ENCODE measurements at regions of chr11 and their contacts with region 1.

Region 1: GRCh38 chr11:2143799-2144543 is 4.8 kb upstream of the IGF2 start:
- DNase-seq: peak; percentile 21
- ATAC-seq: no peak
- H3K4me3 ChIP-seq: peak overlapping the region; percentile 41
- H3K27ac ChIP-seq: no peak overlapping the region
- H3K4me1 ChIP-seq: peaks cover 14% of the 10 kb centered on the region
- H3K27me3 ChIP-seq: peaks cover 67% of the 10 kb centered on the region
- CTCF ChIP-seq: no peak; the same call in 1 of the 2 replicates

Region 2: DNA sequence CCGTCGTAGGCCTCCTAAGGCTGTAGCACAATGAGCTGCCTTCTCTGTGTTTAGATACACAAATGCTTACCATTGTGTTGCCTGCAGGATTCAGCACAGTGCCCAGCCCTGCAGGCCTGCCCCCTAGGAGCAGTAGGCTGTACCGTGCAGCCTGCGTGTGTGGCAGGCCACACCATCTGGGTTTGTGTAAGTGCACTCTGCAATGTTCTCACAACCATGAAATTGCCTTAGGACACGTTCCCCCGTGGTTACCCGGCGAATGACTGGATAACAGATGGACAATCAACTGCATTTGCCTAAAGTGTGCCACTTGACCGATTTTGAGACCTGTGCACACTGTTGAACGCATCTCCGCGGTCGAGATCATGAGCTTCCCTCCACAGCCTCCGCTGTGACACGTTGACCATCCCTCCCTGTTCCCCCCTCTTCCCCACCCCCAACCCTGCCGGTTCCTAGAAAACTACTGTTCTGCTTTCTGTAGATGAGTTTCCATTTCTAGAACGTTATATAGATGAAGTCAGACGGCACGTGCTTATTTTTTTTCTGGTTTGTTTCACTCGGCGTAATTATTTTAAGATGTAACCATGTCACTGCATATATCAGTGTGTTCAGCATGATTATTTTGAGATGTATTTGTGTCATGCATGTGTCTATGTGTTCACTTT is 358.1 kb before region 1 on chr11:
- CTCF ChIA-PET with region 1: interaction called, 15 read pairs
- POLR2A ChIA-PET with region 1: no interaction called
- intact Hi-C with region 1: no loop called
- DNase-seq: no peak
- ATAC-seq: no peak
- H3K4me3 ChIP-seq: no peak overlapping the region
- H3K27ac ChIP-seq: no peak overlapping the region
- H3K4me1 ChIP-seq: peaks cover 13% of the 10 kb centered on the region
- H3K27me3 ChIP-seq: peaks cover 7% of the 10 kb centered on the region; the same call in 1 of the 2 replicates
- CTCF ChIP-seq: no peak

Measured in PC-3 (cell line).